PC-9 (cell line): ENCODE measurements at regions of chr5 and their contacts with region 1.

Region 1: DNA sequence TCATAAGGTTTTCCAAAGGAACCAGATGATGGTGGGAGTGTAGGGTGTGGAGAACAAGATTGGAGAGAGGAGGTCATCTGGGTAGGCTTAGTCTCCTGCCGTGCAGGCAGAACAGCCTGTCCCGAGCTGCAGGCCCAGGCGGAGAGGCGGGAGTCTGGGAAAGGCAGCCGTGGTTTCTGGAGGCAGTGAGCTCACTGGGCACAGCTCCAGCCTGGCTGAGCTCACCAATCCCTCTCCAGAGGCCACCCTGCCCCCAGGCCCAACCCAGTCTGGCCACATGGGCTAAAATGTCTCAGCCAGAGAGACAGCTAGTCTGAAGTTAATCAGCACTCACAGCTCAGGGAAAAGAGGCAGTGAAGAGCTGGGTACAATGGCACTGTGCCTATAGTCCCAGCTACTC is 12.3 kb downstream of the P4HA2 start:
- DNase-seq: peak; percentile 67 to 85
- H3K4me3 ChIP-seq: no peak overlapping the region
- H3K27ac ChIP-seq: no peak overlapping the region
- H3K4me1 ChIP-seq: no peaks in the 10 kb centered on the region
- H3K27me3 ChIP-seq: no peaks in the 10 kb centered on the region
- CTCF ChIP-seq: no peak

Region 2: DNA sequence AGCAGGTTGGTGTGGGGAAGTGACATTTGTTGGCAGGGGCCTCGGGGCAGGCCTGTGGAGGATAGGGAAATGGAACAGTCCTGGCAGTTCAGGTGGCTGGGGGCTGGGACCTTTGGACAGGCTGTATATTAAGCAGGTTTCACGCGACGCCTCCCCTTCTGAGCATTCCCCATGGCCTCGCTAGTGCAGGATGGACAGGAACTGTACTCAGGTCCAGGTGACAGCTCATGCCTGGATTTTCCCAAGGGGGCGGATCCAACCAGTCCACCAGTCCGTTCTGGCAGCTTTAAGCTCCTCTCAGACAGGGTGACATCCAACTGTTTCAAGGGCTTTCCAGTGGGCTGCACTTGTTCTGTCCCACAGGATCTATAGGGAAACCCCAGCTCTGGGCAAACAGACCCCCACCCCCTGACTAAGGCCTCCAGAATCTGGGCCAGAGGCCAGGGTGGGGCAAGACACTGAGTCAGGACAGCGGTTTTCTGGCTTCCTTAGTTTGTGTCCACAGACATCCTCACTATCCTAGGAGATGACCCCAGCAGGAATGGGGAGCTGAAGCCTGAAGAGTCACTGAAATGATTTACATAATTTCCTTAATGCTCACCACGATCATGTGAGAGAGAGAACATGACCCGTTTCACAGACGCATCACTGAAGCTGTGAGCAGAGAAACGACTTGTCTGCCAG is 120.8 kb before region 1 on chr5:
- CTCF ChIA-PET with region 1: no interaction called
- POLR2A ChIA-PET with region 1: no interaction called
- intact Hi-C with region 1: no loop called
- DNase-seq: peak; percentile 80 to 90
- H3K4me3 ChIP-seq: no peak overlapping the region
- H3K27ac ChIP-seq: peak overlapping the region; percentile 76
- H3K4me1 ChIP-seq: peaks cover 45% of the 10 kb centered on the region
- H3K27me3 ChIP-seq: no peaks in the 10 kb centered on the region
- CTCF ChIP-seq: no peak

Region 3: GRCh38 chr5:132147663-132148062 is 67.7 kb before region 1 on chr5:
- CTCF ChIA-PET with region 1: no interaction called
- POLR2A ChIA-PET with region 1: no interaction called
- intact Hi-C with region 1: no loop called
- DNase-seq: no peak
- H3K4me3 ChIP-seq: no peak overlapping the region
- H3K27ac ChIP-seq: no peak overlapping the region
- H3K4me1 ChIP-seq: no peaks in the 10 kb centered on the region
- H3K27me3 ChIP-seq: 0 out of 2 replicates have a peak, but pooled peaks cover 2% of the 10 kb centered on the region
- CTCF ChIP-seq: no peak

Region 4: DNA sequence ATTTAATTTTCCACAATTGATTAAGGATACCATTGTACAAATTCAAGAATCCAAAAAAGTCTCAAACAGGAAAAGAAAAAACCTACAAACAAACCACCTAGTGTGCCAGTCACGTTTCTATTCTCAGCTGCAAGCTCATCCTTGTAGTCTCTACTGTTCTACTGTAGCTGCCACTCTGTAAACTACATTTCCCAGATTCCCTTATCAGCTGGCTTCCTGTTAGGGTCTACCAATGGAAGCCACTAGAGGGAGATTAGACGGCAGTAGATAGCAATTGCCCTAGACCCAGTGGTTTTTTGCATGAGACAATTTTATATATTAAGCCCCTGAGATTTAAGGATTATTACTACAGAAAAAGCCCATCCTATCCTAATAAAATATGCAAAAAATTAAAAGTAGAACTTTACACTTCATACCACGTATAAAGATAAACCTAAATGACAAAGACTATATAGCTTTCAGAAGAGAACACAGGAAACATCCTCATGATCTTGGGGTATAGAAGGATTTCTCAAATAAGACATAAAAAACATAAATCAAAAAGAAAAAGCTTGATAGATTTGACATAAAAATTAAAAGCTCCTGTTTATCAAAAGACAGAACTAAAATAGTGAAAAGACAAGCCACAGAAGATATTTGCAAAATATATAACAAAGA is 25.0 kb before region 1 on chr5:
- CTCF ChIA-PET with region 1: no interaction called
- POLR2A ChIA-PET with region 1: interaction called, 17 read pairs
- intact Hi-C with region 1: no loop called
- DNase-seq: peak; percentile 11 to 57
- H3K4me3 ChIP-seq: no peak overlapping the region
- H3K27ac ChIP-seq: no peak overlapping the region
- H3K4me1 ChIP-seq: no peaks in the 10 kb centered on the region
- H3K27me3 ChIP-seq: no peaks in the 10 kb centered on the region
- CTCF ChIP-seq: peak; percentile 81

Region 5: DNA sequence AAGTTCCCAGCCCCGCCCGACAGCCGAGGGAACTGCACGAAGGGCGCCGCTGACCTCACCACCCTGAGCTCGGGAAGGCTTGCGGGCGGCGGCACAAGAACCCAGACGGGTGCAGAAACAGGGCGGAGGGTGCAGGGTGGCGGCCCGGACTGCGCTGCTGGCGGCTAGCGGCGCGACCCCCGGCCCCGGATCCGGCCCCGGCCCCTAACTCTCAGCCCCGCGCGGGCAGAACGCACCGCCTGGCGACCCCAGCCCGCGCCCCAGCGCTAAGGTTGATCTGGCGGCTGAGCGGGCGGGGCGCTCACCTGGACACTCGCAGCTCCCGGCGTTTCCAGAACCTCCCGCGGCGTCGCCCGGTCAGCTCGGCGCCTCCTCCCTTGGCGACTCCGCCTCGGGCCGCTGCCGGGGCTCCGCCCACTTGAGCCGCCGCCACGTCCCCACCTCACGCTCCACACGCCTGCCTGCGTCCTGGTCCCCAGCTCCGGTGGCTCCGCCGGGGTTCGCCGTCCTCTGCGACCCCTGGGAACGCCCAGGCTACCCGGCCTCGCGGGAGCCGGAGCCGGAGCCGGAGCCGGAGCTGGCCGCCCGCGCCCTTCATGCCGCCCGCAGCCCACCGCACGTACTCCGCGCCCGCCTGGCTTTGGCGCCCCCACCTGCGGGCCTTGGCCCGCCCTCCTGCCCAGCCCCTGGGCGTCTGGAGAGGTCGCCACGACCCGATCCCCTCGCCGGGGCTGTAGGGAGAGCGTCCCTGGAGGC is 12.3 kb after region 1 on chr5 and contains the start of gene P4HA2:
- CTCF ChIA-PET with region 1: no interaction called
- POLR2A ChIA-PET with region 1: interaction called, 12 read pairs
- intact Hi-C with region 1: loop called (anchors 1 kb)
- DNase-seq: peak; percentile 65 to 85
- H3K4me3 ChIP-seq: peak within 1 kb of the TSS; percentile 78
- H3K27ac ChIP-seq: no peak within 1 kb of the TSS
- H3K4me1 ChIP-seq: peaks cover 12% of the 10 kb centered on the region
- H3K27me3 ChIP-seq: no peaks in the 10 kb centered on the region
- CTCF ChIP-seq: no peak; the same call in 1 of the 2 replicates
- total RNA-seq, gene P4HA2: 21.7 and 24.0 TPM in 2 replicates

Region 6: GRCh38 chr5:132540764-132541163 is 325.4 kb after region 1 on chr5:
- CTCF ChIA-PET with region 1: interaction called, 35 read pairs
- POLR2A ChIA-PET with region 1: no interaction called
- intact Hi-C with region 1: no loop called
- DNase-seq: no peak
- H3K4me3 ChIP-seq: no peak overlapping the region
- H3K27ac ChIP-seq: no peak overlapping the region
- H3K4me1 ChIP-seq: no peaks in the 10 kb centered on the region
- H3K27me3 ChIP-seq: no peaks in the 10 kb centered on the region
- CTCF ChIP-seq: no peak